Activated CD4-positive, alpha-beta T cell treated with anti-CD3 and anti-CD28 coated beads for 36 hours (primary cell): ENCODE measurements at regions of chr17 and their contacts with region 1.

Region 1: GRCh38 chr17:68435876-68436842 is 21.1 kb downstream of the WIPI1 start:
- DNase-seq: peak; percentile 91
- ATAC-seq: peak; percentile 80
- H3K4me3 Mint-ChIP-seq: no peak overlapping the region
- H3K27ac Mint-ChIP-seq: peak overlapping the region; percentile 79
- H3K4me1 Mint-ChIP-seq: peaks cover 44% of the 10 kb centered on the region
- H3K27me3 Mint-ChIP-seq: no peaks in the 10 kb centered on the region

Region 2: DNA sequence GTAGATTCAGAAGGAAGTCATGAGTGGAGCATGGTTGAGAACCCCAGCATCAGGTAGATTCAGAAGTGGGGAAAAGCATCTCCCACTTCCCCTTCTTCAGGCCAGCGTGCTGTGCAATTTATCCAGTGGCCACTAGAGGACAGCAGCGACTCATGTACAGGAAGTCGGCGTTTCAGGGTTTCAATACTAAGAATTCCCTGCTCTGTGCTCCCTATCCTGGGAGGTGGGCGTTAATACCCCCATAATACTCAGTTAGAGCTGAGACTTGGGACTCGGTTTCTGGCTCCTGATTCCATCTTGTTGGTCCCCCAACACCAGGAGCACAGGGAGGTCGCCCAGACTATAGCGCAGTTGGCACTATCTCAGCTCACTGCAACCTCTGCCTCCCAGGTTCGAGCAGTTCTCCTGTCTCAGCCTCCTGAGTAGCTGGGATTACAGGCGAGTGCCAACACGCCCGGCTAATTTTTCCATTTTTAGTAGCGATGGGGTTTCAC is 263.7 kb before region 1 on chr17:
- CTCF ChIA-PET with region 1: interaction called, 7 read pairs
- POLR2A ChIA-PET with region 1: no interaction called
- intact Hi-C with region 1: loop called (anchors 1 kb)
- DNase-seq: peak; percentile 84
- ATAC-seq: peak; percentile 69
- H3K4me3 Mint-ChIP-seq: no peak overlapping the region
- H3K27ac Mint-ChIP-seq: no peak overlapping the region
- H3K4me1 Mint-ChIP-seq: peaks cover 17% of the 10 kb centered on the region
- H3K27me3 Mint-ChIP-seq: no peaks in the 10 kb centered on the region

Region 3: GRCh38 chr17:68255731-68256538 is 180.2 kb before region 1 on chr17:
- CTCF ChIA-PET with region 1: interaction called, 112 read pairs
- POLR2A ChIA-PET with region 1: no interaction called
- intact Hi-C with region 1: no loop called
- DNase-seq: peak; percentile 54
- ATAC-seq: peak; percentile 75
- H3K4me3 Mint-ChIP-seq: no peak overlapping the region
- H3K27ac Mint-ChIP-seq: peak overlapping the region; percentile 65
- H3K4me1 Mint-ChIP-seq: peaks cover 78% of the 10 kb centered on the region
- H3K27me3 Mint-ChIP-seq: no peaks in the 10 kb centered on the region

Region 4: GRCh38 chr17:68398691-68399637 is 37.2 kb before region 1 on chr17:
- CTCF ChIA-PET with region 1: interaction called, 6 read pairs
- POLR2A ChIA-PET with region 1: interaction called, 3 read pairs
- intact Hi-C with region 1: loop called (anchors 1 to 5 kb)
- DNase-seq: peak; percentile 59
- ATAC-seq: peak; percentile 35
- H3K4me3 Mint-ChIP-seq: peak overlapping the region; percentile 18
- H3K27ac Mint-ChIP-seq: peak overlapping the region; percentile 82
- H3K4me1 Mint-ChIP-seq: peaks cover 34% of the 10 kb centered on the region
- H3K27me3 Mint-ChIP-seq: no peaks in the 10 kb centered on the region

Region 5: DNA sequence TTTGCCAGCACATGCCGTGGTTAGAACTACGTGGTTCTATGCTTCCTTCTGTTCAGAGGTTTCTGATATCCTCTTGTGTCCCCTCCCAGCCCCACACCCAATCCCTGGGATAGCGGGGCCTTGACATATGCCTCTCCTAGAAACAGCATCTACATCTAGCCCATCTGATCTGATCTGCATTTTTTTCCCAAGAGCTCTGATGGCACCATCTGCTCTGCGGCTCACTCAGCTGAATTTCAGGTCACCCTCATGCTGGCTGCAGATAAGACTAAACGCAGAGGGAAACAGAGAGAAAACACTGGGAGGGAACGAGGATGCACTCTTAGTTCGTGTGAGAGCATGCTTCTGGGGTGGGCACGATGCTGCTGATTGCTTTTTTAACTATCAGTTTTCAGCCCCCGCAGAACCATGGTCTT is 10.5 kb after region 1 on chr17:
- CTCF ChIA-PET with region 1: interaction called, 12 read pairs
- POLR2A ChIA-PET with region 1: no interaction called
- intact Hi-C with region 1: no loop called
- DNase-seq: no peak
- ATAC-seq: no peak
- H3K4me3 Mint-ChIP-seq: no peak overlapping the region
- H3K27ac Mint-ChIP-seq: no peak overlapping the region
- H3K4me1 Mint-ChIP-seq: peaks cover under 1% of the 10 kb centered on the region
- H3K27me3 Mint-ChIP-seq: no peaks in the 10 kb centered on the region

Region 6: GRCh38 chr17:68556556-68556955 is 120.4 kb after region 1 on chr17:
- CTCF ChIA-PET with region 1: no interaction called
- POLR2A ChIA-PET with region 1: no interaction called
- intact Hi-C with region 1: no loop called
- DNase-seq: no peak
- ATAC-seq: no peak
- H3K4me3 Mint-ChIP-seq: no peak overlapping the region
- H3K27ac Mint-ChIP-seq: no peak overlapping the region
- H3K4me1 Mint-ChIP-seq: no peaks in the 10 kb centered on the region
- H3K27me3 Mint-ChIP-seq: no peaks in the 10 kb centered on the region